Right ventricle myocardium inferior (tissue), 1 donor: ENCODE measurements at regions of chr19 and their contacts with region 1.

Region 1: GRCh38 chr19:10870955-10871603 is at the start of gene CARM1:
- DNase-seq: peak; percentile 100
- ATAC-seq: peak; percentile 97
- total RNA-seq, gene CARM1: 39.5 TPM

Region 2: GRCh38 chr19:10095948-10096621 is 775.0 kb before region 1 on chr19:
- intact Hi-C with region 1: no loop called
- DNase-seq: peak; percentile 93
- ATAC-seq: peak; percentile 92

Region 3: GRCh38 chr19:10769533-10770491 is 101.3 kb before region 1 on chr19:
- intact Hi-C with region 1: loop called (anchors 2 kb)
- DNase-seq: no peak
- ATAC-seq: peak; percentile 84

Region 4: DNA sequence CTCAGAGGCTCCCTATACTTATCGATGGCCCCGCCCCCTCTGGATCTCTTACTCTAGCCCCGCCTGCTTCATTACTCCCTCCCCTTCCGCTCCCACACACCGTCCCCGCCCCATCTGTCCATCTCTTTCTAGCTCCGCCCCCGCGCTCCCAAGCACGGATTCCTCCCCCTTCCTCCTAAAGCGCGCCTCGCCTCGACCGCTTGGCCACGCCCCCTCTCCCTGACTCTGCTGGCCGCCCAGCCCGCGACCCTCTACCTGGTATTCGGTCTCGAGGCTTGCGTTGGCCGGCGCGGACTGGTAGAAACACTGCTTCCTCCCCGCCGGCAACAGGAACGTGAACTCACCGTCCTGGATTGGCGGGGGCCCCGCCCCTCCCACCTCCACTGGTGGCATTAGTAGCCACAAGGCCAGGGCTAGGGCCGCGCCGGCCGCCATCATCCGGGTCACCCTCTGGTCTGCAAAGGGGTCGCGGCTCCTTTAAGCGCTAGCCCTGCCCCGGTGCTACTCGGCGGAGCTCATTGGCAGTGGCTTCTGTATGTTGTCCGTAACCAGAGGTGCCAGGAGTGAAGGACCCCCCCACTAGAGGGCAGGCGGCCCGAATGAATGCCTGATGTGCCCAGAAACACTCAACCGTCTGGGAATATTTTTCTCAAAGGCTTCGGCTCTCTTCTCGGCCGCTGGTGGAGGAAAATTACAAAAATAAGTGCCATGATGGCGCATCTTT is 35.2 kb before region 1 on chr19 and contains the start of gene TMED1:
- intact Hi-C with region 1: loop called (anchors 2 kb)
- DNase-seq: peak; percentile 100
- ATAC-seq: peak; percentile 95
- total RNA-seq, gene TMED1: 30.3 TPM

Region 5: GRCh38 chr19:10928525-10929401 is 57.7 kb after region 1 on chr19 and contains the starts of genes TIMM29 and YIPF2:
- intact Hi-C with region 1: loop called (anchors 2 kb)
- DNase-seq: peak; percentile 96
- ATAC-seq: peak; percentile 97
- total RNA-seq, gene TIMM29: 15.3 TPM
- total RNA-seq, gene YIPF2: 15.2 TPM

Region 6: DNA sequence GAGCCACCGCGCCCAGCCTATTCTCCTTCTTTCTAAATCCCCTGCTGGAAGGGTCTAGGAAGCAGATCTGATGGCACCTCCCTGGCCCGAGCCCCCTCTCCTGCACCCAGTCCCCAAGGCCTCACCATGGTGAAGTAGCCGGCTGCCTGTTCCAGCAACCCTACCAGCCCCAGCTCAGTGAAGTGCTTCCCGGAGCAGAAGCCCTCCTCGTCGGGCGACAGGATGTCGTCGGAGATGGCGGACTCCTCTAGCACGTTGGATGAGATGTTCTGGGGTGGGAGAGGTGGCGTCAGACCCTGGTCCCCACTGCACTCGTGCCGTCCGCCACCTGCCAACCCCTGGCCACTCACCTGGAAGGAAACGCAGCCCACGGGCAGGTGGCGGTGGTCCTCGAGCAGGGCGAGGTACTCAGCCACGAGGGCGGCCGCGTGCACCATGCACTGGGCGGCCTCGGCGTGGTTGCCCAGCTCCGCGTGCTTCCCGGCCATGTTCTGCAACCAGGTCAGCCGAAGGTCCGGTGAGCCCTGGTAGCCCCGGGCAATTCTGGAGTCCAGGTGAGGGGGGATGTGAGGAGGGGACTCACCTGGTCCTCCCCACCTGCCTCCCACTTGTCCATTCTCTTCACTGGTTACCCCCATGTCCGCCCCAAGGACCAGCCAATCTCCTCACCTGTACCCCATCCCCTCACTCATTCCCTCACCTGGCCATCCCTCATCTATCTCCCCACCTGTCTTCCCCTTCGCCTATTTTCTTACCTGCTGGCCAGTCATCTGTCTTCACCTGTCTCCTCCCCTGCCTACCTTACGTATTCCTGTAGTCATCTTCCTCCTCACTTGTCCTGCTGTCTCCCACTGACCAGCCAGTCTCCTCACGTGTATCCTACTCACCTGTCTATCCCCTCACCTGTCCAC is 337.7 kb after region 1 on chr19:
- intact Hi-C with region 1: no loop called
- DNase-seq: peak; percentile 71
- ATAC-seq: no peak